T-cell (primary cell): ENCODE measurements at regions of chr11 and their contacts with region 1.

Region 1: GRCh38 chr11:87352759-87353707 is 315.3 kb downstream of the TMEM135 start:
- DNase-seq: peak; percentile 22 to 84 (median 73)
- ATAC-seq: peak; percentile 85 to 89 (median 86)
- H3K4me3 ChIP-seq: no peak overlapping the region
- H3K4me3 Mint-ChIP-seq: peak overlapping the region in 1 of 3 donors; percentile 16
- H3K27ac ChIP-seq: no peak overlapping the region
- H3K27ac Mint-ChIP-seq: no peak overlapping the region
- H3K4me1 ChIP-seq: peaks cover 0 to 8% of the 10 kb centered on the region in 2 experiments
- H3K4me1 Mint-ChIP-seq: peaks cover 11 to 16% (median 12%) of the 10 kb centered on the region in 3 donors
- H3K27me3 ChIP-seq: peaks cover 0 to 10% of the 10 kb centered on the region in 2 experiments
- H3K27me3 Mint-ChIP-seq: peaks cover 8 to 15% of the 10 kb centered on the region in 2 donors

Region 2: DNA sequence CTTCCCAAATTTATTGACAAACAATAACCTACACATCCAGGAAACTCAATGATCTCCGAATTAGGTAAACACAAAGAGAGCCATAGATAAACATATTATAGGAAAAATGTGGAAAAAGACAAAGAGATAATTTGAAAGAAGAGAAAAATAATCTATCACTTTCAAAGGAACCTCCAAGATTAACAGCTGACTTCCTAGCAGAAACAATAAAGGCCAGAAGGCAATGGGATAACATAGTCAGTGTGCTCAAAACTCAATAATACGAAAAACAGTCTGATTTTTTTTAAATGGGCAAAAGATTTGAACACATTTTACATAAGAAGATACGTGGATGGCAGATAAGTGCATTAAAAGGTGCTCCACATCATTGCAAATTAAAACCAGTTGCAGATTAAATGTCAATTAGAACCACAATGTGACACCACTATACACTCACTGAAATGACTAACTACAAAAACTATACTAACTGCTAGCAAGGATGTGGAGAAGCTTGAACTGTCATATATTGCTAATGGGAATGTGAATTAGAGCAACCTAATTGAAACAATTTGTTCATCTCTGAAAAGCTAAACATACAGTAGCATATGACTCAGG is 14.9 kb before region 1 on chr11:
- CTCF ChIA-PET with region 1: no interaction called
- POLR2A ChIA-PET with region 1: no interaction called
- DNase-seq: no peak
- ATAC-seq: no peak
- H3K4me3 ChIP-seq: no peak overlapping the region
- H3K4me3 Mint-ChIP-seq: no peak overlapping the region
- H3K27ac ChIP-seq: no peak overlapping the region
- H3K27ac Mint-ChIP-seq: no peak overlapping the region
- H3K4me1 ChIP-seq: no peaks in the 10 kb centered on the region
- H3K4me1 Mint-ChIP-seq: no peaks in the 10 kb centered on the region
- H3K27me3 ChIP-seq: no peaks in the 10 kb centered on the region
- H3K27me3 Mint-ChIP-seq: no peaks in the 10 kb centered on the region

Region 3: GRCh38 chr11:87421422-87421821 is 68.4 kb after region 1 on chr11:
- CTCF ChIA-PET with region 1: interaction called, 5 to 13 read pairs
- POLR2A ChIA-PET with region 1: no interaction called
- DNase-seq: peak in 11 of 35 experiments; percentile 0 to 72 (median 3)
- ATAC-seq: no peak
- H3K4me3 ChIP-seq: no peak overlapping the region
- H3K4me3 Mint-ChIP-seq: no peak overlapping the region
- H3K27ac ChIP-seq: no peak overlapping the region
- H3K27ac Mint-ChIP-seq: no peak overlapping the region
- H3K4me1 ChIP-seq: no peaks in the 10 kb centered on the region
- H3K4me1 Mint-ChIP-seq: no peaks in the 10 kb centered on the region
- H3K27me3 ChIP-seq: peaks cover 0 to 2% of the 10 kb centered on the region in 2 experiments
- H3K27me3 Mint-ChIP-seq: peaks cover 7 to 8% of the 10 kb centered on the region in 2 donors

Region 4: DNA sequence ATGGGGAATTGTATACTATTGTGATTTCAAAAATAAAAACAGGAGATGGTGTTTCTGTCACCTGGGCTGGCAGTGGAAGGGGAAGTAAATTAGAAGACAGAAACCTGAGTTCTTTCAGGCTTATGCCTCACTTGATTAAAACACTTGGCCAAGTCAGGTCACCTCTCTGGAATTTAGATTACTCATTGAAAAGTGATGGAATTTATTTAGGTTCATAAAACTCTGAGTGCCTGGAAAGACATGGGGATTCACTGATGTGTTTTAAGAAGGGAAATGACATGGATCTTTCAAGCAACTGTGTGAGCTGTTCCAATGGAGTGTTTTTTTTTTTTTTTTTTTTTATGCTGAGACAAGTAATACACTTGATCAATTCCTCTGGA is 84.8 kb after region 1 on chr11:
- CTCF ChIA-PET with region 1: no interaction called
- POLR2A ChIA-PET with region 1: no interaction called
- DNase-seq: no peak
- ATAC-seq: no peak
- H3K4me3 ChIP-seq: no peak overlapping the region
- H3K4me3 Mint-ChIP-seq: no peak overlapping the region
- H3K27ac ChIP-seq: no peak overlapping the region
- H3K27ac Mint-ChIP-seq: no peak overlapping the region
- H3K4me1 ChIP-seq: no peaks in the 10 kb centered on the region
- H3K4me1 Mint-ChIP-seq: no peaks in the 10 kb centered on the region
- H3K27me3 ChIP-seq: no peaks in the 10 kb centered on the region
- H3K27me3 Mint-ChIP-seq: peaks cover 0 to 5% of the 10 kb centered on the region in 2 donors

Region 5: GRCh38 chr11:88543902-88544655 is 1191.0 kb after region 1 on chr11:
- CTCF ChIA-PET with region 1: interaction called in 1 of 2 experiments, 14 read pairs
- POLR2A ChIA-PET with region 1: no interaction called
- DNase-seq: peak; percentile 36 to 84 (median 69)
- ATAC-seq: peak; percentile 85 to 98 (median 96)
- H3K4me3 ChIP-seq: no peak overlapping the region
- H3K4me3 Mint-ChIP-seq: no peak overlapping the region
- H3K27ac ChIP-seq: no peak overlapping the region
- H3K27ac Mint-ChIP-seq: peak overlapping the region in 1 of 2 donors; percentile 49
- H3K4me1 ChIP-seq: no peaks in the 10 kb centered on the region
- H3K4me1 Mint-ChIP-seq: peaks cover 4 to 7% (median 5%) of the 10 kb centered on the region in 3 donors
- H3K27me3 ChIP-seq: no peaks in the 10 kb centered on the region
- H3K27me3 Mint-ChIP-seq: no peaks in the 10 kb centered on the region